CD14-positive monocyte (primary cell): ENCODE measurements at regions of chr10 and their contacts with region 1.

Region 1: GRCh38 chr10:3708852-3709251 is 76.2 kb downstream of the KLF6 start:
- DNase-seq: no peak
- H3K4me3 ChIP-seq: no peak overlapping the region
- H3K4me3 Mint-ChIP-seq: no peak overlapping the region
- H3K27ac ChIP-seq: no peak overlapping the region
- H3K27ac Mint-ChIP-seq: no peak overlapping the region
- H3K4me1 ChIP-seq: peaks cover 5 to 13% of the 10 kb centered on the region in 2 donors
- H3K4me1 Mint-ChIP-seq: peaks cover 11% of the 10 kb centered on the region
- H3K27me3 ChIP-seq: no peaks in the 10 kb centered on the region
- H3K27me3 Mint-ChIP-seq: peaks cover 0 to 1% (median 1%) of the 10 kb centered on the region in 3 donors
- CTCF ChIP-seq: no peak

Region 2: GRCh38 chr10:3248888-3249758 is 459.7 kb before region 1 on chr10:
- intact Hi-C with region 1: loop called in 1 of 2 experiments (anchors 5 kb)
- DNase-seq: peak in 1 of 3 donors; percentile 29
- H3K4me3 ChIP-seq: no peak overlapping the region
- H3K4me3 Mint-ChIP-seq: peak overlapping the region in 1 of 2 donors; percentile 54
- H3K27ac ChIP-seq: no peak overlapping the region
- H3K27ac Mint-ChIP-seq: no peak overlapping the region
- H3K4me1 ChIP-seq: no peaks in the 10 kb centered on the region
- H3K4me1 Mint-ChIP-seq: peaks cover 6% of the 10 kb centered on the region
- H3K27me3 ChIP-seq: no peaks in the 10 kb centered on the region
- H3K27me3 Mint-ChIP-seq: peaks cover 6 to 17% (median 8%) of the 10 kb centered on the region in 3 donors
- CTCF ChIP-seq: no peak